ENCODE measurements at regions of chr17 and their contacts with region 1.

Region 1: DNA sequence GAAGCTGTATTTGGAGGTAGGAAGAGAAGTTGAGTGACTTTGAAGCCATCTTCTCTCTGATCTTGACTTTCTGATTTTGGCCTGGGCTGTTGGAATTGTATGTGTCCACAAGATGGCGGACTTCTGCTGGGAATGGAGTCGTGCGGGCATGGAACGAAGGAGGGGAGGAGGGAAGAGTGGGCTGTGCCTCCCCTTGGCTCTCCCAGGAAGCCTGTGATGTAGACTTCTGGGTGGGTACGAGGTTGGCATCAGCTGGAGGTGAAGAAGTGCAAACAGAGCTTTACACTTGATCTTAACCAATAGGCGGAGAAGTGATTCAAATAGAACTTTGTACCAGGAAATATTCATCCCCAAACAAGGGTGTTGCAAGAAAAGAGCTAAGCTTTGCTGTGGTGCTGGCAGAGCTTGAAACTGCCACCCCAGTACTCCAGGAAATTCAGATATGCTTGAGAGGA is 7.4 kb upstream of the TMEM220 start:
- DNase-seq: peak; percentile 51
- H3K4me3 Mint-ChIP-seq: no peak overlapping the region
- H3K27ac Mint-ChIP-seq: no peak overlapping the region
- H3K4me1 Mint-ChIP-seq: peaks cover 4% of the 10 kb centered on the region
- H3K27me3 Mint-ChIP-seq: peaks cover 26% of the 10 kb centered on the region

Region 2: GRCh38 chr17:10713318-10713717 is 23.9 kb before region 1 on chr17:
- CTCF ChIA-PET with region 1: no interaction called
- DNase-seq: no peak
- H3K4me3 Mint-ChIP-seq: no peak overlapping the region
- H3K27ac Mint-ChIP-seq: no peak overlapping the region
- H3K4me1 Mint-ChIP-seq: no peaks in the 10 kb centered on the region
- H3K27me3 Mint-ChIP-seq: no peaks in the 10 kb centered on the region

Region 3: GRCh38 chr17:10748531-10749163 is 11.5 kb after region 1 on chr17:
- CTCF ChIA-PET with region 1: interaction called, 15 read pairs
- DNase-seq: no peak
- H3K4me3 Mint-ChIP-seq: no peak overlapping the region
- H3K27ac Mint-ChIP-seq: no peak overlapping the region
- H3K4me1 Mint-ChIP-seq: peaks cover 8% of the 10 kb centered on the region
- H3K27me3 Mint-ChIP-seq: peaks cover 19% of the 10 kb centered on the region

Region 4: GRCh38 chr17:10844621-10845387 is 107.6 kb after region 1 on chr17:
- CTCF ChIA-PET with region 1: interaction called, 24 read pairs
- DNase-seq: peak; percentile 82
- H3K4me3 Mint-ChIP-seq: peak overlapping the region; percentile 68
- H3K27ac Mint-ChIP-seq: no peak overlapping the region
- H3K4me1 Mint-ChIP-seq: peaks cover 8% of the 10 kb centered on the region
- H3K27me3 Mint-ChIP-seq: peaks cover 26% of the 10 kb centered on the region